BJ (cell line): ENCODE measurements at regions of chr6 and their contacts with region 1.

Region 1: GRCh38 chr6:56570413-56571359 is 72.0 kb downstream of the DST start:
- DNase-seq: no peak
- H3K4me3 ChIP-seq: no peak overlapping the region
- H3K27me3 ChIP-seq: no peaks in the 10 kb centered on the region
- CTCF ChIP-seq: peak; percentile 58

Region 2: GRCh38 chr6:56555438-56555872 is 15.2 kb before region 1 on chr6:
- CTCF ChIA-PET with region 1: interaction called, 11 read pairs
- POLR2A ChIA-PET with region 1: no interaction called
- DNase-seq: no peak
- H3K4me3 ChIP-seq: no peak overlapping the region
- H3K27me3 ChIP-seq: no peaks in the 10 kb centered on the region
- CTCF ChIP-seq: no peak

Region 3: GRCh38 chr6:56659721-56660380 is 89.2 kb after region 1 on chr6:
- CTCF ChIA-PET with region 1: no interaction called
- POLR2A ChIA-PET with region 1: no interaction called
- DNase-seq: no peak
- H3K4me3 ChIP-seq: no peak overlapping the region
- H3K27me3 ChIP-seq: no peaks in the 10 kb centered on the region
- CTCF ChIP-seq: no peak